ENCODE measurements at regions of chr6 and their contacts with region 1.

Region 1: DNA sequence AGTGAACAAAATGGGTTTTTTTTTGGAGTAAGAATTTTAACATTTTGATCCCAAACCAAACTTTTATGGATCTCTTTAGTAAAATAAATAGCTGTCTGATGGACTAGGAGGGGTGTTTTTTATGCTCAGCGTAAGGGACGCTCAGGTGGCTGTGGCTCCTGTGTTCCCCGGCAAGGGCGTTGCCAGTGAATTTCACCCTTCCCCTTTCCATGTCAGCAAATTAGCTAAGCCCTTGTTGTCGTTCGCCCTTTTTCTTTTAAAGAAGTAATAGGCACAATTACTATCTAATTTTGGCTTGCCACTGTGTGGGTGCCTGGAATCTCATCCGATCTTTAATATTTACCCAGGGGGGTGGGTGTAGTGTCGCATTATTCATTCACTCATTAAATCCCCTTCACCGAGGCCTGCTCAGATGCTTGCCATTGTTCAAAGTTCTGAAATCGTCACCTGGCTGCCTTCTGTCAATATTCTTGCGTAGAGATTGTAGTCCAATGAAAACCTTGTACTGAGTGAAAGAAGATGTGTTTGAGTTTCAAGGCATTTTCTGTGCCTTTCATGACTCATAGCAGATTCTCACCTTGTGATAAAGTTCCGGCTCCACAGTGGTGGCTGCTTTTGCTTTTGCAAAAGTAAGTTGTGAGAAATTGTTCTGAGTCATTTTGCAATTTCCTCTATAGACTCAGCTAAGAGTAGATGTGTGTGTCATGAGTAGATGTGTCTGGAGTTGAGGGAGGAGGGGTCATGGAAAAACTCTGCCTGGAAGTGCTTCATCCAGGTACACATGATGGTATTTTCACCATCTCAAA is 40.0 kb upstream of the CLDN20 start:
- DNase-seq: peak; percentile 81
- ATAC-seq: peak; percentile 99
- H3K4me3 ChIP-seq: no peak overlapping the region
- H3K27ac ChIP-seq: peak overlapping the region; percentile 15; the same call in 1 of the 2 replicates
- H3K4me1 ChIP-seq: peaks cover 15% of the 10 kb centered on the region
- H3K27me3 ChIP-seq: no peaks in the 10 kb centered on the region
- CTCF ChIP-seq: no peak
- EP300 ChIP-seq: peak; percentile 39 to 84; a peak in 2 of 4 replicates
- POLR2A ChIP-seq: no peak
- RAD21 ChIP-seq: no peak

Region 2: DNA sequence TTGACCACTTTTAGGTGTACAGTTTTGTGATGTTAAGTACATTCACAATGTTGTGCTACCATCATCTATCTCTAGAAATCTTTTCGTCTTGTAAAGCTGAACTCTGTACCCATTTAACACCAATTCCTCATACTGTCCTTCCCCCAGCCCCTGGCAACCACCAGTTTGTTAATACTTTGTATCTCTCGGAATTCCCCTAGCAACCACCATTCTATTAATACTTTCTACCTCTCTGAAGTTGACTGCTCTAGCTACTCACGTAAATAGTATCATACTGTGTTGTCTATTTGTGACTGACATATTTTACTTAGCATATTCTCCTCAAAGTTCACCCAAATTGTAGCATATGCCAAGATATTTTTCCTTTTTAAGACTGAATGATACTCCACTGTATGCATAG is 42.4 kb before region 1 on chr6:
- CTCF ChIA-PET with region 1: interaction called, 23 read pairs
- POLR2A ChIA-PET with region 1: interaction called, 19 read pairs
- RAD21 ChIA-PET with region 1: interaction called, 17 read pairs
- SMC1A ChIA-PET with region 1: interaction called, 23 read pairs
- in situ Hi-C with region 1: no loop called
- intact Hi-C with region 1: loop called (anchors 2 kb)
- DNase-seq: no peak
- ATAC-seq: peak; percentile 60
- H3K4me3 ChIP-seq: 0 out of 2 replicates have a peak overlapping the region, but pooled peaks have one; percentile 16
- H3K27ac ChIP-seq: peak overlapping the region; percentile 81
- H3K4me1 ChIP-seq: peaks cover 22% of the 10 kb centered on the region
- H3K27me3 ChIP-seq: no peaks in the 10 kb centered on the region
- CTCF ChIP-seq: no peak
- EP300 ChIP-seq: peak; percentile 66 to 88
- POLR2A ChIP-seq: no peak
- RAD21 ChIP-seq: no peak

Region 3: DNA sequence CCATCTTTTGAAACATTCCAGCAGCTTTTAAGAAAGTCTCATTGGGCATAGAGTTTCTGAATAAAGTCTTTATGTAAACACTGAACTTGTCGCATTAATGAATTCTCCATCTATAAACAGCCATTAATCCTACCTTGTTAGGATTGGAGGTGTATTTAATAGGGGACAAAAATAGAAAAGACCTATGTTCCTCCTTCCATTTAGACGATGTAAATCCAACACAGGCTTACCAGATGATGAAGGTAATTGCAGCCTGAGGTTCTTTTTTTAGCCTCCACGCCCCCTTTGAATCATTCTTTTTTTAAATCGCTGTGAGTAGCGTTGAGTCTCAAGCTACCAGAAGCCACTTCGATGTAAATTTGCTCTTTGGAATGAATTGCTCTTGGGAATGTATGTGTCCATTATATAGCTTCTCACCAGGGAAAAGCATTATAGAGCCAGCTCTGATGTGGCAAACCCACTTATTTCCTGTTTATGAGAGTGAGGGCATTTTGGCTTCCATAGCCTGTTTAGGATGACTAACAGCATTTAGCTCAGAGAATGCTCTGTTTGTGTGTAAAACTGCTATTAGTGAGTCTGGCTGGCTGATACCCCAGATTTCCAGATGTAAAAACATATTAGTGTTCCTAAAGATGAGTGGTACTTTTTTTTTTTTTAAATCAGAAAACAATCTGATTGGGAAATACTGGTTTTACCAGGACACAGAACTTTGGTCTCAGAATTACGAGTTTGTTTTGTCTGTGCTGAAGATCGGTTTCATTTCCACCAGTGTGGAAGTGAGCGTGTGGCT is 34.9 kb before region 1 on chr6:
- CTCF ChIA-PET with region 1: no interaction called
- POLR2A ChIA-PET with region 1: interaction called, 19 read pairs
- RAD21 ChIA-PET with region 1: interaction called, 15 read pairs
- SMC1A ChIA-PET with region 1: interaction called, 22 read pairs
- in situ Hi-C with region 1: no loop called
- intact Hi-C with region 1: no loop called
- DNase-seq: no peak
- ATAC-seq: peak; percentile 11; the same call in 1 of the 3 replicates
- H3K4me3 ChIP-seq: peak overlapping the region; percentile 0; the same call in 1 of the 2 replicates
- H3K27ac ChIP-seq: no peak overlapping the region
- H3K4me1 ChIP-seq: peaks cover 4% of the 10 kb centered on the region; the same call in 1 of the 2 replicates
- H3K27me3 ChIP-seq: no peaks in the 10 kb centered on the region
- CTCF ChIP-seq: no peak
- EP300 ChIP-seq: no peak
- POLR2A ChIP-seq: no peak
- RAD21 ChIP-seq: no peak

Region 4: DNA sequence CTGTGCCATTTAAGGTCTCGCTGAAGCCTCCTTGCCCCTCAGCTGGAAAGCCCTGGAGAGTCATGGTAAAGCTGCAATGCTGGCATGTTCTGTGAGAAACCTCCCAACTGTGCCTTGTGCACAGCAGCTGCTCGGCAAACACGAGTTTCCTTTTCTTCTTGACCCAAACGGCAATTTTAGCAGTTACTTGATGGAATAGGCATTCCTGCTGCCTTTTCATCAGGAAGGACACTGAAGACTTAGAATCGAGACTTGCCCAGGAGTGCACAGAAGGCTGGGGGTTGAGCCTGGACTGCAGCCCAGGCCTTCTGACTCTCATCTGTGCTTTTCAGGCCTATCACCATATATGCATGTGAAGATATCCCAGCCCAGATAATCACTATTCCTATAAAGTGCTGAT is 11.2 kb after region 1 on chr6:
- CTCF ChIA-PET with region 1: no interaction called
- POLR2A ChIA-PET with region 1: no interaction called
- RAD21 ChIA-PET with region 1: interaction called, 3 read pairs
- SMC1A ChIA-PET with region 1: interaction called, 14 read pairs
- in situ Hi-C with region 1: no loop called
- intact Hi-C with region 1: no loop called
- DNase-seq: no peak
- ATAC-seq: no peak
- H3K4me3 ChIP-seq: no peak overlapping the region
- H3K27ac ChIP-seq: no peak overlapping the region
- H3K4me1 ChIP-seq: peaks cover 4% of the 10 kb centered on the region
- H3K27me3 ChIP-seq: no peaks in the 10 kb centered on the region
- CTCF ChIP-seq: no peak
- EP300 ChIP-seq: no peak
- POLR2A ChIP-seq: no peak
- RAD21 ChIP-seq: no peak

Region 5: GRCh38 chr6:155765275-155766194 is 541.7 kb after region 1 on chr6:
- CTCF ChIA-PET with region 1: no interaction called
- POLR2A ChIA-PET with region 1: no interaction called
- RAD21 ChIA-PET with region 1: no interaction called
- SMC1A ChIA-PET with region 1: no interaction called
- in situ Hi-C with region 1: no loop called
- intact Hi-C with region 1: no loop called
- DNase-seq: no peak
- ATAC-seq: no peak
- H3K4me3 ChIP-seq: no peak overlapping the region
- H3K27ac ChIP-seq: no peak overlapping the region
- H3K4me1 ChIP-seq: no peaks in the 10 kb centered on the region
- H3K27me3 ChIP-seq: no peaks in the 10 kb centered on the region; a peak in 1 of 4 replicates
- CTCF ChIP-seq: no peak
- EP300 ChIP-seq: no peak
- POLR2A ChIP-seq: no peak
- RAD21 ChIP-seq: no peak

Measured in GM12878 (cell line).